AG04450 (cell line): ENCODE measurements at regions of chr16 and their contacts with region 1.

Region 1: DNA sequence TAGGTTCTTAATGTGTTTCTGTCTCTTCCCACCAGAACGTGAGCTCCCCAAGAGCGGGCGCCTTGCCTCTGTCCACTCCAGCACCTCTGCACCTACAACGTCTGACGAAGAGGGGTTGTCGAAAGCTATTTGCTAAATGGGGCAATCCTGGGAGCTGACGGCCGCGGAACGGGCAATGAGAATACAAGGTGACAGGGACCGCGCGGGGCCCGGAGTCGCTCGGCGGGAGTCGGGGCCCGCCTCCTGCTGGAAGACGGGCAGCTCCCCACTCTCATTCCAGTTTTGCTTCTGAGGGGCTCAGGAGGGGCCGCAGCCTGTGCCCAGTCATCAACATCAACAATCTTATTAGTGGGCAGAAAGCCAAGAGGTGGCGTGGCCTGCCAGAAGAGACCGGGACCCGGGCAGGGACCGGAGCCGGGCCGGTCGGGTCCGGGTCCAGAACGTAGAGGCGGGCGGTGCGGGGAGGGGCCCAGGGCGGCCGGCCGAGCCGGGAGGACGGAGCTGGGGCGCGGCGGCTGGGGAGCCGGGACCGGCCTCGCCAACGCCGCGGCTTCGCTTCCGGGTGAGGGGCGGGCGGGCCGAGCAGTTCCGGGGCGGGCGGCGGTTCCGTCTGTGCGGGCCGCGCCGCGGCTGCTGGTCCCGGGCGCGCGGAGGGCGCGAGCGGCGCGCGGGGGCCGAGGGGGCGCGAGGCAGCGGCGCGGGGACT is at the start of gene MOSMO:
- DNase-seq: no peak
- H3K4me3 ChIP-seq: peak within 1 kb of the TSS; percentile 77
- H3K27ac ChIP-seq: peak within 1 kb of the TSS; percentile 25
- H3K27me3 ChIP-seq: no peaks in the 10 kb centered on the region
- CTCF ChIP-seq: no peak
- polyA plus RNA-seq, gene MOSMO: 15.6 and 15.8 TPM in 2 replicates

Region 2: DNA sequence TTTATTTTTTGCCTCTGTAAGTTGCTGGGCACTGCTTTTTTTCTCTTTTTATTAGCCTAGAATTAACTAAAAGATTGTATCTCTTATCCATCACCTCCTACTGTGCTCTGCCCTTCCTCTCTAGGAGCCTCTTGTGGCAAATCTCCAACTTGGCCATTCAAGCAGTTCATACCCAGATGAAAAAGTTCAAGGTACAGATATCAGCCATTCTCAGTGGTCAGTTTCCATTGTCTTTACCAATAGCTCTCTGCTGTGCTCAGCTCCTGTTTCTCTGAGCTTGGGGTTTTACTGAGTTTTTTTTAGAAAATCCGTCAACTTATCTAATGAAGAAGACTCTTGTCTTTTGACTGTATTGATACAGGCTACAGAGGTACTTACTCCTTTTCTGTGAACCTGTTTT is 15.8 kb after region 1 on chr16:
- CTCF ChIA-PET with region 1: interaction called, 3 read pairs
- POLR2A ChIA-PET with region 1: interaction called, 14 read pairs
- DNase-seq: no peak
- H3K4me3 ChIP-seq: no peak overlapping the region
- H3K27ac ChIP-seq: no peak overlapping the region
- H3K27me3 ChIP-seq: no peaks in the 10 kb centered on the region
- CTCF ChIP-seq: no peak

Region 3: GRCh38 chr16:22144520-22144919 is 136.9 kb after region 1 on chr16:
- CTCF ChIA-PET with region 1: no interaction called
- POLR2A ChIA-PET with region 1: no interaction called
- DNase-seq: no peak
- H3K4me3 ChIP-seq: no peak overlapping the region
- H3K27ac ChIP-seq: no peak overlapping the region
- H3K27me3 ChIP-seq: peaks cover 15% of the 10 kb centered on the region
- CTCF ChIP-seq: no peak

Region 4: DNA sequence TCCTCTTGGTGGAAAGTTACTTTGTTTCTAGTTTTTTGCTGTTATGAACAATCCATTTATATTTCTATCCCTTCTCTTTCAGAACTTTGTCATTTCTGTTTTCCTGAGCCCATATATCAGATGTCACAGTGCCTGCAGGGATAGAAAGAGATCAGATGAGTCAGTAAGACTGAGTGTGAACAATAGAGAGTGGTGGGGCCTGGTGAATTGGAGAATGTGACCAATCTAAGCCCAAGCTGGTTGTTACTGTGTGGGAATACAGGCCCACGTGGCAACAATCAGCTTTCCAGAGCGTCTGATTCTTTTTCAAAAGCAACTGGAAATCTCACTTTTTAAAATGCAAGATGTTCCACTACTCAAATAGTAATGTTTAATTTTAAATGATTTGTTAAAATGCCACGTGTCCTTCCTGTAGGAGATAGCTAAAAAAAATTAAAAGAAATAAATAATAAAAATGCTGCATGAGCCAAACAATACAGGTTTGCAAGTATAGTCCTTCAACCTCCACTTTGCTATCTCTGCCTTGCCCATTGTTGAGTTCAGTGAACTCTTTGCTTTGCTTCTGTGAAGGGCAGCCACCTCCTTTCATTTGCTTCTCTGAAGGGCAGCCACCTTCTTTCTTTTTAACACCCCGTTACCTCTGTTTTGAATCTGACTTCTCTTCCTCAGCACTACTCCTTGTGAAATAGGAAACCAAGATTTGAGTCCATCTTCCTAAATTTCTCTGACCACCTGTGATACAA is 1643.2 kb after region 1 on chr16:
- CTCF ChIA-PET with region 1: no interaction called
- POLR2A ChIA-PET with region 1: interaction called, 12 read pairs
- DNase-seq: no peak
- H3K4me3 ChIP-seq: no peak overlapping the region
- H3K27ac ChIP-seq: no peak overlapping the region
- H3K27me3 ChIP-seq: no peaks in the 10 kb centered on the region
- CTCF ChIP-seq: no peak